Mammary epithelial cell (primary cell): ENCODE measurements at regions of chr1 and their contacts with region 1.

Region 1: GRCh38 chr1:35702508-35702907 is 16.2 kb downstream of the C1orf216 start:
- DNase-seq: no peak
- H3K4me3 ChIP-seq: no peak overlapping the region
- H3K27ac ChIP-seq: no peak overlapping the region
- H3K4me1 ChIP-seq: no peaks in the 10 kb centered on the region
- H3K27me3 ChIP-seq: peaks cover 15% of the 10 kb centered on the region
- CTCF ChIP-seq: no peak

Region 2: DNA sequence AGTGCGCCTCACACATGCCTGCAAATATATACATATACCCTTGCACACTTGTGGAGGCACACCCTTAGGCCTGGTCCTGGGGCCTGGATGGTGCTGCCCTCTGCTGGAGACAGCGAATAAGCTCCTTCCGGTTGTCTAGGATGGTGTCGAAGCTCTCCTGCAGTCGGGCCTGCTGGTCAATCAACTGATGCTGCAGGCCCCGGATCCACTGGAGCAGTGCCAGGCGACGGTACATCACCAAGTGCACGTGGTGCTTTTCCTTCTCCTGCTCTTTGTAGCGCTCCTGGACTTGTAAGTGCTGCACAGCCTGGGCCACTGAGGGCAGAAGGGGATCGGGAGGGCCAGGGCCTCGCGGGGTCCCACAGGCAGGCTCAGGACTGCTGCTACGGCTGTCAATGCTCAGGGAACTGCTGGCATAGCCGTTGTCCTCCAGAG is 13.1 kb after region 1 on chr1:
- CTCF ChIA-PET with region 1: interaction called, 23 read pairs
- dilution Hi-C with region 1: no loop called
- in situ Hi-C with region 1: no loop called
- intact Hi-C with region 1: no loop called
- DNase-seq: peak; percentile 57
- H3K4me3 ChIP-seq: no peak overlapping the region
- H3K27ac ChIP-seq: no peak overlapping the region
- H3K4me1 ChIP-seq: peaks cover 18% of the 10 kb centered on the region
- H3K27me3 ChIP-seq: no peaks in the 10 kb centered on the region
- CTCF ChIP-seq: peak; percentile 87 to 92